ENCODE measurements at regions of chr15 and their contacts with region 1.

Region 1: DNA sequence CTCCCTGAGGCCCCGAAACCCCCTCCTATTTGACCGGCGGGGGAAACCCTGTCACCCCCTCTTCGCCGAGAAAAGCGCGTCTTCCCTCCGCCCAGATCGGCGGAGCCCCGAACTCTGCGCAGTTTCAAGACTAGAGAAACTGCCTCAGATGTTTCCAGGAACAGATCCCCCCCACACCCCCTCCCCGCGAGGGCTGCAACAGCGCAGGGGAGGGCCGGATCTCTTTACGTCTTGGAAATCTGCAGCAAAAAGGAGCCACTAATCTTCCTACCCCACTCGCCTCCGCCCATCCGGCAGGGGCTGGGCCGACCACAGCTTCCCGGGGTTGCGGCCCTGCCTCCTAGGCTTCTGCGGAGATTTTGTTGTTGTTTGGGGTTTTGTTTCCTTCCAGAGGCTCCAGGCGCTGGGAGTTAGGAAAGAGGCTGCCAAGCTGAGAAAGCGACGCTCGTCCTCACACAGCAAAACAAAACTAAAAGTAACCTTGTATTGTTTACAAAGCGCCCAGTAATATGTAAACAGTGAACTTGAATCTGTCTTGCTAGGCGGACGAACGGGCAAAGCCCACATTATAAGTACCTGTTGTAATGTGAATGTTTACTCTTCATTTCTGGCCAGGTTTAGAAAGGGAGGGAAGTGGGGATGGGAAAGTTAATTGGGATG is 2.2 kb downstream of the FOXB1 start:
- DNase-seq: peak; percentile 78
- H3K4me3 Mint-ChIP-seq: peak overlapping the region; percentile 93
- H3K27ac Mint-ChIP-seq: peak overlapping the region; percentile 96
- H3K4me1 Mint-ChIP-seq: peaks cover 19% of the 10 kb centered on the region
- H3K27me3 Mint-ChIP-seq: peaks cover 40% of the 10 kb centered on the region
- CTCF ChIP-seq: no peak

Region 2: GRCh38 chr15:60079210-60079609 is 72.9 kb after region 1 on chr15:
- CTCF ChIA-PET with region 1: no interaction called
- POLR2A ChIA-PET with region 1: no interaction called
- intact Hi-C with region 1: loop called (anchors 10 kb)
- DNase-seq: no peak
- H3K4me3 Mint-ChIP-seq: no peak overlapping the region
- H3K27ac Mint-ChIP-seq: no peak overlapping the region
- H3K4me1 Mint-ChIP-seq: peaks cover under 1% of the 10 kb centered on the region
- H3K27me3 Mint-ChIP-seq: no peaks in the 10 kb centered on the region
- CTCF ChIP-seq: no peak

Region 3: GRCh38 chr15:60128000-60128376 is 121.7 kb after region 1 on chr15:
- CTCF ChIA-PET with region 1: no interaction called
- POLR2A ChIA-PET with region 1: interaction called, 7 read pairs
- intact Hi-C with region 1: loop called (anchors 5 kb)
- DNase-seq: no peak
- H3K4me3 Mint-ChIP-seq: peak overlapping the region; percentile 85
- H3K27ac Mint-ChIP-seq: peak overlapping the region; percentile 94
- H3K4me1 Mint-ChIP-seq: peaks cover 18% of the 10 kb centered on the region
- H3K27me3 Mint-ChIP-seq: no peaks in the 10 kb centered on the region
- CTCF ChIP-seq: no peak